ENCODE measurements at regions of chr22 and their contacts with region 1.

Region 1: DNA sequence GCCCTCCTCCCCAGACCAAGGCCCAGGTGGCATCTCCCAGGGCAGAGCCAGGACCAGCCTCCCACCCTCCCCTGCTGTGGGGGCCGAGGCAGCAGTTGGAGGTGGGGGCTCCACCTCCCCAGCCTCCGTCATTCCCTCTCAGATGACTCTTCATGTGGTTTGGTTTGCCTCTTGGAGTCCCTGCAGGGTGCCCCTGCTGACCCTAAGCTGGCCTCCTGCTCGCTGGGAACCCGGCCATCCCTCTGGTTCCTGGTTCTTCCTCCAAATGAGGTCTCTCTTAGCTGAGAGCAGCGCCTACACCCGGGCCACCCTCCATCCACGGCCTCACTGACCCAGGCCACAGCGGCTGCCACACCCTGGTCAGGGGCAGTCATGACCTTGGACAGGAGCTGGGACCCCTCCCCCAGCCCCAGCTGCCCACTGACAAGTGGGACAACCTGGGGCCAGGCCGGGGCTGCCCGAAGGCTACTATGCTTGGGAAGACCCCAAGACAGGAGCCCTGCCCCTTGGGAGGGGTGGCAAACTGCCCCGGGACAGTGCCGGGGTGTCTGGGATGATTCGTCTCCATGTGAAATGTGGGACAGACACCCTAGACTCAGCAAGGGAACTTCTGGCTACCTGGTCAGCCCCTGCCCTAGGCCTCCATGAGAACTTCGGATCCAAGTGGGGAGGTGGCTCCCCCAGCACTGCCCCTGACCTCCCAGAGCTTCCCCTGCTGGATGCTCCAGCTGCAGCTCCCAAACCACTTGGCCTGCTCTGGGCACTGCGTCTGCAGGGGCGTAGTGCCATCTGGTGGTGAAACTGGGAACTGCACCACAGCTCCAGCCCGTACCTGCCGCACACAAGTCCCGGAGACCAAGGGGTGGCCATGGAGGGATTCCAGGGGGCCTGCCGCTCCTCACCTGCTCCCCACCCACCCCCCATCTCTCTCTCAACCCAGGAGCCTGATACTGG is 194.5 kb downstream of the IGLL1 start:
- H3K4me3 ChIP-seq: no peak overlapping the region
- H3K27ac ChIP-seq: no peak overlapping the region
- H3K4me1 ChIP-seq: no peaks in the 10 kb centered on the region
- CTCF ChIP-seq: peak; percentile 98

Region 2: DNA sequence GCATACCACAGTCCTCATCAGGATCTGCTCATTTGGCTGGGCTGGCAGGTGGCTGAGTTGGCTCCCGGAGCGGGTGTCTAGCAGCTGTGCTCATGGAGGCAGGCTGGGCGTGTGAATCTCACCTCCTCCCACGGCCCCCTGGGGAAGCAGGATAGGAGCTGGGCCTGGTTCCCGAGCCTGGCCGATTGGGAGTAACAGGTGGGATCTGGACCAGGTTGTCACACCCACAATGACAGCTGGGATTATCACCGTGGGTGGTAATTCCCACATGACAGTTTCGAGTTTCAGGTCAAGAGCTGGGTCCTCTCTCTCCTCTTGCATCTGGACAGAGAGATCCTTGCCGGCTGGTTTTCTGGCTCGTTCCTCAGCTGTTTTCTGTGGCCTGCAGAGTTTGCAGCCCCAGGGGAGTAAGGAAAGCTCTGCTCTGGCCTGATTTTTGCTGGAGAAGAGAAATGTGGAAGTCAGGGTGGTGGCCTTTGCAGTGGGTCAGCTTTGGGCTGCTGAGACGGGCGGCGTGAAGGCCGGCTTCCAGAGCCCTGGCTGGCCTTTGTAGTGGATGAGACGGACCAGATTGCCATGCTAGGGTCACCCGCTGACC is 148.3 kb before region 1 on chr22:
- CTCF ChIA-PET with region 1: no interaction called
- POLR2A ChIA-PET with region 1: no interaction called
- H3K4me3 ChIP-seq: no peak overlapping the region
- H3K27ac ChIP-seq: no peak overlapping the region
- H3K4me1 ChIP-seq: no peaks in the 10 kb centered on the region
- CTCF ChIP-seq: no peak

Region 3: DNA sequence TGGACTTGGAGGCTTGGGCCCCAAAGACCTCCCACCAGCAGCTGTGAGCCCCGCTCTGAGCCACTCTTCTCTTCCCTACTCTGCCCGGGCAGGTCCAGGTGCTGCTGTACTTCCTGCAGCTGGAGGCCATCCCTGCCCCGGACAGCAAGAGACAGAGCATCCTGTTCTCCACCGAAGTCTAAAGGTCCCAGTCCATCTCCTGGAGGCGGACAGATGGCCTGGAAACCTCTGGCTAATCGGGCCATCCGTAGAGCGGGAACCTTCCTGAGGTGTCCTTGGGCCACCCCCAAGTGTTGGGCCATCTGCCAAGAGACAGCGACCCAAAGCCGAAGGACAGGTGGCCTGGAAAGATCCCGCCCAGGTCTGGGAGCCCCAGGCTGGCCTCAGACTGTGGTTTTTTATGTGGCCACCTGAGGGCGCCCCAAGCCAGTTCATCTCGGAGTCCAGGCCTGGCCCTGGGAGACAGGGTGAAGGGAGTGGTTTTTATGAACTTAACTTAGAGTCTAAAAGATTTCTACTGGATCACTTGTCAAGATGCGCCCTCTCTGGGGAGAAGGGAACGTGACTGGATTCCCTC is 70.1 kb before region 1 on chr22:
- CTCF ChIA-PET with region 1: interaction called, 16 read pairs
- POLR2A ChIA-PET with region 1: no interaction called
- H3K4me3 ChIP-seq: no peak overlapping the region
- H3K27ac ChIP-seq: no peak overlapping the region
- H3K4me1 ChIP-seq: no peaks in the 10 kb centered on the region
- CTCF ChIP-seq: peak; percentile 62

Region 4: GRCh38 chr22:23322547-23322946 is 63.0 kb before region 1 on chr22:
- CTCF ChIA-PET with region 1: interaction called, 11 read pairs
- POLR2A ChIA-PET with region 1: no interaction called
- H3K4me3 ChIP-seq: no peak overlapping the region
- H3K27ac ChIP-seq: no peak overlapping the region
- H3K4me1 ChIP-seq: no peaks in the 10 kb centered on the region
- CTCF ChIP-seq: no peak

Region 5: DNA sequence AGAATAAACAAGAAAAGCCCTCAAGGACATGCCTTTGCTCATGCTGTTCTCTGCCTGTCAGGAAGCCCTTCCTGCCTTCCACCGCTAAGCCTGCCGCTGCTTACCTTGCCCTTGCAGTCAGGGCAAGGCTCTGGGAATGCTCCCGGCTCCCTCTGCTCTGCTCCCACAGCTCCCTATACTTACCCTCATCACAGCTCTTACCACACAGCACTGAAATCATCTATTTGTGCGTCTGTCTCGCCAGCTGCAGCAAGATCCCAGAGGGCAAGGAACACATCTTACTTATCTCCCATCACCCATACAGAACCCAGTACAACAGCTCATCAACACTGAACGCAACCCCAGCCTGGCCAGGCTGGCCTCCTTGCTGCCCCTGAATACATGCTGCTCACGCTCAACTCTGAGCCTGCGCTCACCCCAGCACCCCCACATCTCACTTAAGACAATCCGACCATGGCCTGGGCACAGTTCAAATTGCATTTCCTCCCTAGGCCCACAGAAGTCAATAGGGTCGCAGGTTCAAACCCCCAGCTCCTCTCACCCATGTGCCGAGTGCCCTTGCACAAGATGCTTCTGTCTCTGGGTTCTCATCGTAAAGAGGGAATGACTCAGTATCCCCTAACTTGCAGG is 32.7 kb after region 1 on chr22:
- CTCF ChIA-PET with region 1: no interaction called
- POLR2A ChIA-PET with region 1: no interaction called
- H3K4me3 ChIP-seq: no peak overlapping the region
- H3K27ac ChIP-seq: no peak overlapping the region
- H3K4me1 ChIP-seq: no peaks in the 10 kb centered on the region
- CTCF ChIP-seq: no peak

Region 6: GRCh38 chr22:23457355-23458068 is 71.9 kb after region 1 on chr22:
- CTCF ChIA-PET with region 1: no interaction called
- POLR2A ChIA-PET with region 1: no interaction called
- H3K4me3 ChIP-seq: no peak overlapping the region
- H3K27ac ChIP-seq: no peak overlapping the region
- H3K4me1 ChIP-seq: no peaks in the 10 kb centered on the region
- CTCF ChIP-seq: no peak